ENCODE measurements at regions of chr2 and their contacts with region 1.

Region 1: DNA sequence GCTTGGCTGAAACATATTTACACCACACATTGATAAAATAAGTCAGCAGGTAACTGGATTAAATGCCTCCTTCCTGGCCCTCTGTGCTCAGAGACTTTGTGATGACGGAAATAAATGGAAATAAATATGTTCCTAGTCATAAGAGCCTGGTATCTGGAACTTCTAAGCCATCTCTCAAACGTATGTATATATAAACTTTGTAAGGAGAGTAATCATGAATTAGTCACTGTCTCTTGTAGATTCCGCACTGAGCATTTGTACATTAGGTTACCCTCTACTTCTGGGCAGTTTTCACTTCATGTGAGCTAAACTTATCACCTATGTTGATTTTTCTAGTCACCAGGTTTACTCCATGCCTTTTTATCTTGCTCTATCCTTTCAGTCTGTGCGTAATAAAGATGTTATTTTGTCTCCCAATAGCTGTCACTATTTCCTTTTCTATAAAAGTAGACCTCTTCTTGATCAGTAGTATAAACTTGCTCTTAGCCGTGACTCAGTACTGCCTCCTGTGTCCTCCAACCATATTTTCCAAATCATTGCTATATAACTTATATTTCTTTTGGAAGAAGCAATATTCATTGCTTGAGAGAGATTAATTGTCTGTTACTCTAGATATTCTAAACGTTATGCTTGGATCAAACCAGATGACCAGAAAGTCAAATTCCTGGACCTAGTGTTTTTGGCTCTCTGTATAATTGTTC is 53.2 kb downstream of the FEZ2 start:
- DNase-seq: no peak
- ATAC-seq: no peak
- H3K4me3 ChIP-seq: no peak overlapping the region
- H3K4me3 Mint-ChIP-seq: no peak overlapping the region
- H3K27ac ChIP-seq: no peak overlapping the region
- H3K27ac Mint-ChIP-seq: no peak overlapping the region
- H3K4me1 ChIP-seq: peaks cover 0 to 10% of the 10 kb centered on the region in 2 experiments
- H3K4me1 Mint-ChIP-seq: peaks cover 5 to 16% (median 12%) of the 10 kb centered on the region in 3 donors
- H3K27me3 ChIP-seq: no peaks in the 10 kb centered on the region
- H3K27me3 Mint-ChIP-seq: no peaks in the 10 kb centered on the region

Region 2: GRCh38 chr2:36356307-36356989 is 188.3 kb before region 1 on chr2:
- CTCF ChIA-PET with region 1: interaction called in 1 of 2 experiments, 4 read pairs
- POLR2A ChIA-PET with region 1: interaction called in 1 of 2 experiments, 10 read pairs
- DNase-seq: peak in 15 of 35 experiments; percentile 4 to 36 (median 18)
- ATAC-seq: peak in 3 of 4 experiments; percentile 6 to 41 (median 36)
- H3K4me3 ChIP-seq: peak overlapping the region; percentile 50 to 85
- H3K4me3 Mint-ChIP-seq: peak overlapping the region; percentile 70 to 94 (median 79)
- H3K27ac ChIP-seq: no peak overlapping the region
- H3K27ac Mint-ChIP-seq: no peak overlapping the region
- H3K4me1 ChIP-seq: peaks cover 11 to 17% of the 10 kb centered on the region in 2 experiments
- H3K4me1 Mint-ChIP-seq: peaks cover 31 to 46% (median 34%) of the 10 kb centered on the region in 3 donors
- H3K27me3 ChIP-seq: peaks cover 0 to 22% of the 10 kb centered on the region in 2 experiments
- H3K27me3 Mint-ChIP-seq: peaks cover 44 to 45% of the 10 kb centered on the region in 2 donors

Region 3: DNA sequence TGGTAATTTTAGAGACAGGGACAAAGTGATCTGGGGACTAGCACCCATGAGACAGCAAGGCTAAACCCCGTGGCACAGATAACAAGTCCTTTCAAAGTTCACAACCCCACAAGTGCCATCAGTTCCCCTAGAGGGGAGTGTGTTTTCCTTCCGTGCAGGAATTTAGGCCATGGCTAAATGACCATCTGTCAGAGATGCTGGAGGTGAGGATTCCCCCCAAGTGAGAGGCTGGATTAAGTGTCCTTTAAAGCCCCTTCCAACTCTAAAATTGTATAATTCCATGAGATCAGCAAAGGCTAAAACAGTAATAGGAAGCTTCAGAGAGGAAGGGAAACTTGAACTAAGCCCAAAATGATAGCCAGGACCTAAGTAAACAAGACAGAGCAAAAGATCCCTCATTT is 44.4 kb after region 1 on chr2:
- CTCF ChIA-PET with region 1: interaction called in 1 of 2 experiments, 11 read pairs
- POLR2A ChIA-PET with region 1: no interaction called
- DNase-seq: no peak
- ATAC-seq: no peak
- H3K4me3 ChIP-seq: no peak overlapping the region
- H3K4me3 Mint-ChIP-seq: no peak overlapping the region
- H3K27ac ChIP-seq: no peak overlapping the region
- H3K27ac Mint-ChIP-seq: no peak overlapping the region
- H3K4me1 ChIP-seq: peaks cover 0 to 2% of the 10 kb centered on the region in 2 experiments
- H3K4me1 Mint-ChIP-seq: peaks cover 15 to 31% (median 23%) of the 10 kb centered on the region in 3 donors
- H3K27me3 ChIP-seq: no peaks in the 10 kb centered on the region
- H3K27me3 Mint-ChIP-seq: no peaks in the 10 kb centered on the region

Measured in T-cell (primary cell).